Mammary epithelial cell (primary cell): ENCODE measurements at regions of chr2 and their contacts with region 1.

Region 1: GRCh38 chr2:185583062-185583816 is 155.4 kb upstream of the FSIP2 start:
- DNase-seq: peak; percentile 96
- H3K4me3 ChIP-seq: no peak overlapping the region
- H3K27ac ChIP-seq: peak overlapping the region; percentile 72
- H3K4me1 ChIP-seq: peaks cover 20% of the 10 kb centered on the region
- H3K27me3 ChIP-seq: no peaks in the 10 kb centered on the region
- CTCF ChIP-seq: no peak

Region 2: GRCh38 chr2:185433824-185434223 is 149.4 kb before region 1 on chr2:
- CTCF ChIA-PET with region 1: no interaction called
- dilution Hi-C with region 1: no loop called
- in situ Hi-C with region 1: no loop called
- intact Hi-C with region 1: loop called (anchors 10 kb)
- DNase-seq: peak; percentile 67
- H3K4me3 ChIP-seq: peak overlapping the region; percentile 24 to 83 (median 65)
- H3K27ac ChIP-seq: peak overlapping the region; percentile 61
- H3K4me1 ChIP-seq: peaks cover 14% of the 10 kb centered on the region
- H3K27me3 ChIP-seq: no peaks in the 10 kb centered on the region
- CTCF ChIP-seq: no peak

Region 3: GRCh38 chr2:185782223-185782769 is 199.1 kb after region 1 on chr2:
- CTCF ChIA-PET with region 1: no interaction called
- dilution Hi-C with region 1: no loop called
- in situ Hi-C with region 1: no loop called
- intact Hi-C with region 1: no loop called
- DNase-seq: no peak
- H3K4me3 ChIP-seq: no peak overlapping the region
- H3K27ac ChIP-seq: no peak overlapping the region
- H3K4me1 ChIP-seq: no peaks in the 10 kb centered on the region
- H3K27me3 ChIP-seq: no peaks in the 10 kb centered on the region
- CTCF ChIP-seq: no peak

Region 4: GRCh38 chr2:186868344-186868743 is 1285.1 kb after region 1 on chr2:
- CTCF ChIA-PET with region 1: no interaction called
- dilution Hi-C with region 1: no loop called
- in situ Hi-C with region 1: no loop called
- intact Hi-C with region 1: no loop called
- DNase-seq: no peak
- H3K4me3 ChIP-seq: no peak overlapping the region
- H3K27ac ChIP-seq: no peak overlapping the region
- H3K4me1 ChIP-seq: no peaks in the 10 kb centered on the region
- H3K27me3 ChIP-seq: no peaks in the 10 kb centered on the region
- CTCF ChIP-seq: no peak